ENCODE measurements at regions of chr5 and their contacts with region 1.

Region 1: GRCh38 chr5:74648835-74649293 is 8.3 kb upstream of the ENC1 start:
- DNase-seq: no peak
- H3K4me3 ChIP-seq: peak overlapping the region in 1 of 2 donors; percentile 22
- H3K27ac ChIP-seq: no peak overlapping the region
- H3K4me1 ChIP-seq: peaks cover 0 to 18% of the 10 kb centered on the region in 2 donors
- H3K27me3 ChIP-seq: no peaks in the 10 kb centered on the region
- CTCF ChIP-seq: peak; percentile 62 to 76 (median 64)

Region 2: GRCh38 chr5:74056789-74057164 is 592.1 kb before region 1 on chr5:
- intact Hi-C with region 1: loop called (anchors 5 kb)
- DNase-seq: no peak
- H3K4me3 ChIP-seq: no peak overlapping the region
- H3K27ac ChIP-seq: no peak overlapping the region
- H3K4me1 ChIP-seq: peaks cover 0 to 11% of the 10 kb centered on the region in 2 donors
- H3K27me3 ChIP-seq: no peaks in the 10 kb centered on the region
- CTCF ChIP-seq: no peak

Region 3: DNA sequence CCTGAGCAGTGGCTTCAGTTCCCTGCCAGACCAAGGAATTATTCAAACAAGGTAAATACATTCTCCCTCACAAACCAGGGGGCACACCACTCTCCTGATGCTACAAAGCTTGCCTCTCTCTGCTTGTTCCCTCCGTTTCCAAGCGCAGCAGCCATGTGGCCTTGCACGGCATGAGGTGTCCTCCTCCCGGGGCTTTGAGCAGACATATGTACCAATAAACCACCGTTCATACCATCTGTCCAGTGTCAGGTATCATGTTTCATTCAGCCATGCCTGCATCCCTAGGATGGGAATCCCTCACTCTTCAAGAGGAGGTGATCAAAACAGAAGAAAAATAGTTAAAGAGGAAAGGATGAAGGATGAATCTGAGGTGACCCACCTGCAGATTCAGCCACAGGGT is 291.0 kb before region 1 on chr5:
- intact Hi-C with region 1: no loop called
- DNase-seq: no peak
- H3K4me3 ChIP-seq: no peak overlapping the region
- H3K27ac ChIP-seq: no peak overlapping the region
- H3K4me1 ChIP-seq: no peaks in the 10 kb centered on the region
- H3K27me3 ChIP-seq: no peaks in the 10 kb centered on the region
- CTCF ChIP-seq: no peak

Region 4: DNA sequence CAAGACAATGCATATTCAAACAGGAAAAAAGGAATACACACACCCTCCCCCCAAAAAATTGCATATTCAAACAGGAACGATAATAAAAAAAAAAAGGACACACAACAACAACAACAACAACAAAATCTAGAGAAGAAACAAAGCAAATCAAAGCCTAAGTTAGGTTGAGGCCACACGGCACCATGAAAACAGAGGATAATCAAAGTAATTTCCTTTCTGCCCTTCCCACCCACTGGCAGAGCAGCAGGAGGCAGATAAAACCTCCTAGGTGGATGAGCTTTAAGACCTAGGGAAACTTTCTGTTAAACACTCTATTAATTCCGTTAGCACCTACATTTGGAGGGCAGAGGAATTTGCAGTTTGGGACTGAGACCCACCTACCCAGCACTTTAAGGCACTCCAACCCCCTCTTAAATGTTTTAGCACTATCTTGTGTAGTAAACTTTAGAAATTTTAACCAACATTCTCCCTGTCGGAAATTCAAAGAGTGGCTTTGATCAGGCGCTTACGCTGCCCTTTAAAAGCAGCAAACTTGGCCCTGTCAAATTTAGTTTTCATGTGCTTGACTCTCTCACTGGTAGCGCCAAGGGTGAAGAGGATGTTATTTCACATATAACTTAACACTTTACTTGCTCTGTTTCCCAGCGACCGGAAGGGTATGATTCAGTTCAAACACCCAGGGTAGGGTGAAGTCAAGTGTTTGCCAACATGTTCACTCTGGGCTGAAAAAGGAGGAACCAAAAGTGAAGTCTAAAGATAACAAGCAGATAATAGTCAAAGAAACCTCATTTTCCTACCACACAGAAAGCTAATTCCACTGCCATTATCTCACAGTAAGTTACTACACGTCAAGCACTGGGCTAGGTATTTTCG is 17.5 kb before region 1 on chr5:
- intact Hi-C with region 1: no loop called
- DNase-seq: no peak
- H3K4me3 ChIP-seq: no peak overlapping the region
- H3K27ac ChIP-seq: peak overlapping the region in 1 of 2 donors; percentile 7
- H3K4me1 ChIP-seq: peaks cover 0 to 4% of the 10 kb centered on the region in 2 donors
- H3K27me3 ChIP-seq: no peaks in the 10 kb centered on the region
- CTCF ChIP-seq: no peak